Activated CD4-positive, alpha-beta T cell treated with anti-CD3 and anti-CD28 coated beads for 36 hours (primary cell): ENCODE measurements at regions of chr17 and their contacts with region 1.

Region 1: GRCh38 chr17:40340880-40341807 is 23.4 kb downstream of the GJD3 start:
- DNase-seq: peak; percentile 93
- ATAC-seq: peak; percentile 87
- H3K4me3 Mint-ChIP-seq: peak overlapping the region; percentile 60
- H3K27ac Mint-ChIP-seq: peak overlapping the region; percentile 85
- H3K4me1 Mint-ChIP-seq: peaks cover 74% of the 10 kb centered on the region
- H3K27me3 Mint-ChIP-seq: no peaks in the 10 kb centered on the region

Region 2: GRCh38 chr17:40130352-40131042 is 210.6 kb before region 1 on chr17:
- CTCF ChIA-PET with region 1: no interaction called
- POLR2A ChIA-PET with region 1: no interaction called
- intact Hi-C with region 1: no loop called
- DNase-seq: no peak
- ATAC-seq: no peak
- H3K4me3 Mint-ChIP-seq: no peak overlapping the region
- H3K27ac Mint-ChIP-seq: peak overlapping the region; percentile 62
- H3K4me1 Mint-ChIP-seq: peaks cover 11% of the 10 kb centered on the region
- H3K27me3 Mint-ChIP-seq: no peaks in the 10 kb centered on the region

Region 3: DNA sequence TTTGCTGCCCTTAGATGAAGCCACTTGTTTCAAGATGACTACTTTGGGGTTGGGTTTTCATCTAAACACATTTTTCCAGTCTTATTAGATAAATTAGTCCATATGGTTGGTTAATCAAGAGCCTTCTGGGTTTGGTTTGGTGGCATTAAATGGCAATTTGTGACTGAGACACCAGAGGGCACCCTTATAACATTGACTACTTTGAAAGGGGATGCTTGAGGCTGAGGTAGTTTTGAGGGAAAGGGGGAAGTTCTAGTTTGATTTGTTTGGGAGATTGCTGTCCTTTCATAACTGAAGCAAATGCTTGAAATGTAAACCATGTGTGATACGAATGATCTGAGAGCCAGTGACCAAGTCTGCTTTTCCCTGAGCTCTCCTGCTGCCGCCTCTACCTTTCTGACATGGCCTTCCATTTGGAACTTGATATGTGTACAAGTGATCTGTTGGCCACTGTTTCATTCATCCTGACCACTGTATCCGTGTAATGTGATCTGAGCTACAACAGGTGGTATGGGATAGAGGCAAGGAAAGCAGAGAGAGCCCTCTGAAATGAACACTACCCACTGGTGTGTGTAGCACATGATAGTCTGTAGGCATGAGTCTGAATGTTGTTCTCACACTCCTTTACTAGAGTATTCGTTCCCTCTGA is 38.0 kb before region 1 on chr17:
- CTCF ChIA-PET with region 1: interaction called, 6 read pairs
- POLR2A ChIA-PET with region 1: interaction called, 3 read pairs
- intact Hi-C with region 1: loop called (anchors 1 to 5 kb)
- DNase-seq: peak; percentile 53
- ATAC-seq: no peak
- H3K4me3 Mint-ChIP-seq: no peak overlapping the region
- H3K27ac Mint-ChIP-seq: peak overlapping the region; percentile 59
- H3K4me1 Mint-ChIP-seq: peaks cover 16% of the 10 kb centered on the region
- H3K27me3 Mint-ChIP-seq: no peaks in the 10 kb centered on the region

Region 4: GRCh38 chr17:40309031-40309948 is 31.9 kb before region 1 on chr17 and contains the start of gene RARA:
- CTCF ChIA-PET with region 1: interaction called, 4 read pairs
- POLR2A ChIA-PET with region 1: interaction called, 3 read pairs
- intact Hi-C with region 1: loop called in 1 of 2 experiments (anchors 5 kb)
- DNase-seq: peak; percentile 50
- ATAC-seq: peak; percentile 34
- H3K4me3 Mint-ChIP-seq: no peak within 1 kb of the TSS
- H3K27ac Mint-ChIP-seq: no peak within 1 kb of the TSS
- H3K4me1 Mint-ChIP-seq: peaks cover 38% of the 10 kb centered on the region
- H3K27me3 Mint-ChIP-seq: no peaks in the 10 kb centered on the region
- total RNA-seq, gene RARA: 29.8 to 40.2 TPM

Region 5: GRCh38 chr17:40326014-40326831 is 14.9 kb before region 1 on chr17:
- CTCF ChIA-PET with region 1: interaction called, 16 read pairs
- POLR2A ChIA-PET with region 1: interaction called, 3 read pairs
- intact Hi-C with region 1: loop called (anchors 1 to 2 kb)
- DNase-seq: peak; percentile 76
- ATAC-seq: peak; percentile 40
- H3K4me3 Mint-ChIP-seq: peak overlapping the region; percentile 64
- H3K27ac Mint-ChIP-seq: peak overlapping the region; percentile 84
- H3K4me1 Mint-ChIP-seq: peaks cover 95% of the 10 kb centered on the region
- H3K27me3 Mint-ChIP-seq: no peaks in the 10 kb centered on the region